ENCODE measurements at regions of chr10 and their contacts with region 1.

Region 1: DNA sequence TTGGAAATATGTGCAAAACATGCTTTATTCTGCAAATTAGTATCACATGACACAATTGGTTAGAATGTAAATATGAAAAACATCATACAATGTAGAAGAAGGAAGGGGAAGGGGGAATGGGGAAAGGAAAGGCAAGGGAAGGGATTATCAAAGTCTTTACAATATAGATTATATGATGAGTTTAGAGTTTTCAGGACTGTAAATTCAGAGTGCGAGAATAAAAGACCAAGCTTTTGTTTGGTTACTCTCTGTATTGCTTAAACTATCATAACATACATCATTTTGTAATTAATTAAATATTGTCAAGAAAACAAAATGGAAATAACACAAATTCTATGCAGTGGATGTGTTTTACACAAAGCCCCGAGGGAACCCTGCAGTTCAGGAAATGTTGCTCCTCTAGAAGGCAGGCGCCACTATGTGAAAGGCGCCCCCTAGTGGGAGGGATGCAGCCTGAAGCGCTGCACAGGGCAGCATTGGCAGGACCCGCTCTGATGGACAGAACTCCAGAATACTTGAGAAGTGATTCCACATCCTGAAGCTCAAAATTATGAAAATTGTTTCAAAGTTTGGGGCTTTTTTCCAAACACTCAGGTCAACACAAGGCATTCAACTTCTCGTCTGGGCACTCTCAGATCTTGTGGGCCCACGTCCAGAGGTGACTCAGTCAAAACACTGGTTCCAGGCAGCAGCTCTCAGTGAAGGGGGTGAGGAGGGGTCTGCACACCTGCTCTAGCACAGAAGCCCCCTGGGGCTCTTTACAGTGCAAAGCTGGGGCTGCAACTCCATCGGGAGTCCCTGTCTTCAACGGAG is 31.6 kb upstream of the TMEM254 start:
- DNase-seq: no peak
- H3K4me3 ChIP-seq: no peak overlapping the region
- H3K27me3 ChIP-seq: peaks cover 5% of the 10 kb centered on the region; the same call in 1 of the 2 replicates
- CTCF ChIP-seq: peak; percentile 95

Region 2: DNA sequence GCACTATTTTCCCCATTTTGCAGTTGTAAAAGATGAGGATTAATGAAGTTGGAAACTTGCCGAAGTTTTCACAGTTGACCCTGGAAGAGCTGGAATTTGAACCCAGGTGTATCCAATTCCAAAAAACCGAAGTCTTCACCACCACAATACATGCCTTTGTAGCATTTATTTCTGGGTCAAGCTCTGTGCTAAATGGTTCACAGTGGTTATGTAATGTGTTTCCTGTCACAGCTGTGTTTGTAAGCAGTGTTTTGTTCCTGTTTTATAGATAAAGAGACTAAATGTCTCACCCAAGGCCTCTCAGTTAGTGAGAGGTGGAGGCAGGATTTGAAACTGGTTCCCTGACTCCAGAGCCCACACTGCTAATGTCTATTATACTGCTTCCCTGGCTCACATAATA is 504.2 kb before region 1 on chr10:
- CTCF ChIA-PET with region 1: interaction called, 24 read pairs
- POLR2A ChIA-PET with region 1: no interaction called
- DNase-seq: no peak
- H3K4me3 ChIP-seq: no peak overlapping the region
- H3K27me3 ChIP-seq: peaks cover 4% of the 10 kb centered on the region
- CTCF ChIP-seq: no peak

Region 3: GRCh38 chr10:80132299-80133139 is 85.7 kb after region 1 on chr10 and contains the start of gene PLAC9:
- CTCF ChIA-PET with region 1: no interaction called
- POLR2A ChIA-PET with region 1: no interaction called
- DNase-seq: no peak
- H3K4me3 ChIP-seq: peak within 1 kb of the TSS; percentile 53
- H3K27me3 ChIP-seq: no peaks in the 10 kb centered on the region
- CTCF ChIP-seq: no peak
- polyA plus RNA-seq, gene PLAC9: 16.3 and 19.3 TPM in 2 replicates